ENCODE measurements at regions of chr1 and their contacts with region 1.

Region 1: GRCh38 chr1:205480349-205480985 is 24.0 kb upstream of the CDK18 start:
- DNase-seq: no peak
- H3K4me3 ChIP-seq: no peak overlapping the region
- H3K27ac ChIP-seq: no peak overlapping the region
- H3K4me1 ChIP-seq: peaks cover 5 to 14% of the 10 kb centered on the region in 2 donors
- H3K27me3 ChIP-seq: no peaks in the 10 kb centered on the region
- CTCF ChIP-seq: no peak
- POLR2A ChIP-seq: no peak

Region 2: DNA sequence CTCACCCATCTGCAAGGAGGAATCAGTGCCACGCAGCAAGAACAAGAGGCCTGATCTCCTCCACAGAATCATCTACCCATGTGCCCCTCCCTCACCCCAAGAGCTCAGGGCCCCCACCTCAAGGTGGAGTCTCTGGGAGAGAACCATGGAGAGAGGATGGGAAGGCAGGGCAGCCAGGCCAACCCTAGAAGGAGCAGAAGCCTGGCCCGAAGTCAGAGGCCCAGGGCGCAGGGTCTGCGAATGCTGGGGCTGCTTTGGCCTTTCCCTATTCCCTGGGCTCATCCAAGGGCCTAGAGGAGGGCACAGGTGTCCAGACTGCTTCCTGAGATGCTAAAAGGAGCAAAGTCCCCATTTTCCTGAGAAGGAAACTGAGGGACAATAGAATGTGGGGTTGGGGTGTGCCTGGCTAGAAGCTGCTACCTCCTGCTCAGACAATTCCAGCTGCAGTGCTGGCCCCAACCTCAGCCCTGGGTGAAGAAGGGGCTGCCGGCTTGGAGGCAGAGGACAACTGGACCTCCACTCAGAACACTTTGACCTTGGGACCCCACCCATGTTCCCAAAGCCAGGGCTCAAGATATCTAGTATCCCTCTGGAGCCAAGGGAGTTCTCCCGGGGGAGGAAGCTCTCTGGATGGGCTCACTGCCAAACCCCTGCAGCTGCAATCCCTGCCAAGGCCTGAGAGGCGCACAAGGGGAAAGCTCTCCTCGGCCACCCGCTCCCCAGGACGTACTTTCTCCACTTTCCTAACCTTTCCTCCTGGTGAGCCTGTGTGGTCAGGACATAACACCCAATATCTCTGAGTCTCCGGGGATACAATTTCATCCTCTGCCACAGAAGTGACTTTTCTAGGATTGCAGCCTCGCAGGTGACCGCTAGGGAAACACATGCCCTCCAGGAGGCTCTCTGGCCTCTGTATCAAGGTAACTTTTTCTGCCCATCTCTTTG is 42.0 kb before region 1 on chr1:
- intact Hi-C with region 1: loop called (anchors 5 kb)
- DNase-seq: peak; percentile 91 to 92
- H3K4me3 ChIP-seq: no peak overlapping the region
- H3K27ac ChIP-seq: peak overlapping the region; percentile 26 to 67 (median 59)
- H3K4me1 ChIP-seq: peaks cover 44 to 60% of the 10 kb centered on the region in 2 donors
- H3K27me3 ChIP-seq: no peaks in the 10 kb centered on the region
- CTCF ChIP-seq: peak; percentile 62 to 88 (median 76)
- POLR2A ChIP-seq: no peak

Region 3: DNA sequence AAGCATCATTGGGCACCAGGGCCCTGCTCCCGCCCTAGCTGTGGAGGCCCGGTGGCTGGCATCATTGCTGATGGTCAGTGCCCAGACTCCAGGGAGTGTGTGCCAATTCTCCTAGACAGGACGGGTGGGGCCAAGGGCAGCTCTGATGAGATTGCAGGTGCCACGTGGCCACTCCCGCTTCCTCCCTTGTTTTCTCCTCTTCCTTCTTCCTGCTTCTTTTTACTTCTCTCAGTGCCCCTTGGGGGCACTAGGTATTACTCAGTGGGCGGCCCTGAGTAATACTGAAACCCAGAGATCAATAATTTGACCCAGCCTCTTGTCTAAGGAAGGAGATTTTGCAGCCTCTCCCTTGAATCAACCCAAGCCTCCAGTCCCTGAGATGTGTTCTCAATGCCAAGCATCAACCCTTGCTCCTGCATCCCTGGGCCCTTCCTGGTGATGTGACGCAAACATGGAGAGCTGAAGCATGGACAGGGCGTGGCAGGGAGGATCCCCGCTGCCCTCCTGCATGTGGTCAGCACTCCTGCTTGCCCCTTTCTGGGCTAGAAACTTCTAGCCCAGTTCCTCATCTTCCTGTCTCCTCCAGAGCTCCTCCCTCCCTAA is 56.4 kb after region 1 on chr1:
- intact Hi-C with region 1: no loop called
- DNase-seq: no peak
- H3K4me3 ChIP-seq: no peak overlapping the region
- H3K27ac ChIP-seq: no peak overlapping the region
- H3K4me1 ChIP-seq: no peaks in the 10 kb centered on the region
- H3K27me3 ChIP-seq: no peaks in the 10 kb centered on the region
- CTCF ChIP-seq: no peak
- POLR2A ChIP-seq: no peak